ENCODE measurements at regions of chr17 and their contacts with region 1.

Region 1: GRCh38 chr17:40191237-40192208 is 14.3 kb downstream of the RAPGEFL1 start:
- DNase-seq: peak; percentile 53
- H3K4me3 Mint-ChIP-seq: peak overlapping the region; percentile 92
- H3K27ac Mint-ChIP-seq: peak overlapping the region; percentile 79
- H3K4me1 Mint-ChIP-seq: peaks cover 16% of the 10 kb centered on the region
- H3K27me3 Mint-ChIP-seq: peaks cover 2% of the 10 kb centered on the region

Region 2: GRCh38 chr17:40177275-40177874 is 14.1 kb before region 1 on chr17 and contains the start of gene RAPGEFL1:
- intact Hi-C with region 1: loop called (anchors 2 kb)
- DNase-seq: peak; percentile 69
- H3K4me3 Mint-ChIP-seq: peak within 1 kb of the TSS; percentile 51
- H3K27ac Mint-ChIP-seq: peak within 1 kb of the TSS; percentile 70
- H3K4me1 Mint-ChIP-seq: peaks cover 8% of the 10 kb centered on the region
- H3K27me3 Mint-ChIP-seq: no peaks in the 10 kb centered on the region
- total RNA-seq, gene RAPGEFL1: 11.8 and 13.0 TPM in 2 replicates